Gastrocnemius medialis (tissue), 4 donors: ENCODE measurements at regions of chr20 and their contacts with region 1.

Region 1: GRCh38 chr20:36199345-36200257 is 36.7 kb upstream of the AAR2 start:
- DNase-seq: peak; percentile 37 to 74
- ATAC-seq: peak; percentile 73 to 86
- H3K4me3 ChIP-seq: no peak overlapping the region
- H3K27ac ChIP-seq: no peak overlapping the region
- H3K4me1 ChIP-seq: peaks cover 0 to 4% of the 10 kb centered on the region in 2 donors
- H3K27me3 ChIP-seq: no peaks in the 10 kb centered on the region
- CTCF ChIP-seq: peak; percentile 73 to 90 (median 85)
- POLR2A ChIP-seq: no peak

Region 2: DNA sequence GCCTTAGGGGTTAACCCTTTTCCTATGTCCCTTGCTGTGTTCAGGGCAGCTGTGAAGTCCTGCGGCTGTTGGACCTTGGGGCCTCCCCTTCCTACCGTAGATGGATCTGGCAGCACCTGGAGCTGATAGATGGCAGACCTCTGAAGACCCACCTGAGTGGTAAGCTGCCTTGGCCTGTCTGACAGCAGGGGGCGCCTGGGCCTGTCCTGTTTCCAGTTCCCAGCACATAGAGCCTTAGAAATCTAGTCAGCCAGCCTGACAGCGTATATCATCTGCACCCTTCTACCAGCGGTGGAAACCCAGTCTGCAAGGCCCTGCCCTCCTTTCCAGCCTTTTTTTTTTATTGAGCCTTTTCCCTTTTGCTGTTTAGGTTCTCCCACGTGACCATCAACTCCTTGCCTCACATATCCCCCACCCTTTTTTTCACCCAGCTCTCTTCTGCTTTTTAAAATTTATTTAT is 204.6 kb before region 1 on chr20:
- in situ Hi-C with region 1: no loop called
- intact Hi-C with region 1: loop called (anchors 5 kb)
- DNase-seq: peak; percentile 46 to 65
- ATAC-seq: peak; percentile 82 to 94
- H3K4me3 ChIP-seq: no peak overlapping the region
- H3K27ac ChIP-seq: no peak overlapping the region
- H3K4me1 ChIP-seq: peaks cover 6 to 10% of the 10 kb centered on the region in 2 donors
- H3K27me3 ChIP-seq: no peaks in the 10 kb centered on the region
- CTCF ChIP-seq: peak; percentile 76 to 87 (median 83)
- POLR2A ChIP-seq: no peak

Region 3: GRCh38 chr20:36098364-36098763 is 101.2 kb before region 1 on chr20:
- in situ Hi-C with region 1: no loop called
- intact Hi-C with region 1: no loop called
- DNase-seq: peak in 1 of 2 donors; percentile 36
- ATAC-seq: peak in 1 of 2 donors; percentile 47
- H3K4me3 ChIP-seq: no peak overlapping the region
- H3K27ac ChIP-seq: peak overlapping the region in 1 of 4 donors; percentile 26
- H3K4me1 ChIP-seq: peaks cover under 1 to 5% of the 10 kb centered on the region in 2 donors
- H3K27me3 ChIP-seq: peaks cover 4 to 12% (median 8%) of the 10 kb centered on the region in 3 donors
- CTCF ChIP-seq: no peak
- POLR2A ChIP-seq: no peak

Region 4: GRCh38 chr20:36155991-36156390 is 43.6 kb before region 1 on chr20:
- in situ Hi-C with region 1: no loop called
- intact Hi-C with region 1: loop called (anchors 1 kb)
- DNase-seq: no peak
- ATAC-seq: no peak
- H3K4me3 ChIP-seq: peak overlapping the region in 1 of 4 donors; percentile 59
- H3K27ac ChIP-seq: peak overlapping the region in 1 of 4 donors; percentile 62
- H3K4me1 ChIP-seq: peaks cover 7 to 13% of the 10 kb centered on the region in 2 donors
- H3K27me3 ChIP-seq: no peaks in the 10 kb centered on the region
- CTCF ChIP-seq: no peak
- POLR2A ChIP-seq: no peak

Region 5: DNA sequence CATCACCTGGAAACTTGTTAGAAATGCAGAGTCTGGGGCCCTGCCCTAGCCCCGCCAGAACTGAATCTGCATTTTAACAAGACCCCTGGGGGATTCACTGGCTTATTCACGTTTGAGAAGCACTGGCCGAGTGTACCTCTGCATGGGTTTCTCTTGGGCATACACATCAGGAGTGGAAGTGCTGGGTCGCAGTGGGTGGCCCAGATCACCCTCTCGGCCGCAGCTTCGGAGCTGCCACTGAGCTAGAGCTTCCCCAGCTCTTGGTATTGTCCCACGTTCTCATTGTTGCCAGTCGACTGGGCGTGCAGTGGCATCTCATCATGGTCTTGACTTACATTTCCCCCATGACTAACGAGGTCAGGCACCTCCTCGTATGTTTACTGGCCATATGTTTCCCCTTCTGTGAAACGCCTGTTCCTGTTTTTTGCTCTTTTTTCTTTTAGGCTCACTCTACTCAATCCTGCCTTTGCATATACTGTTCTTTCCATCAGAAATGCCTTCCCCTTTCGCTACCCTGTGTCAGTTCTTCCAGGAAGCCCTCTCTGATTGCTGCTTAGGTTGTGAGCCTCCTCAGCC is 103.5 kb after region 1 on chr20:
- in situ Hi-C with region 1: no loop called
- intact Hi-C with region 1: no loop called
- DNase-seq: no peak
- ATAC-seq: no peak
- H3K4me3 ChIP-seq: no peak overlapping the region
- H3K27ac ChIP-seq: no peak overlapping the region
- H3K4me1 ChIP-seq: peaks cover 4% of the 10 kb centered on the region in 2 donors
- H3K27me3 ChIP-seq: peaks cover 58 to 63% (median 60%) of the 10 kb centered on the region in 3 donors
- CTCF ChIP-seq: no peak
- POLR2A ChIP-seq: no peak

Region 6: DNA sequence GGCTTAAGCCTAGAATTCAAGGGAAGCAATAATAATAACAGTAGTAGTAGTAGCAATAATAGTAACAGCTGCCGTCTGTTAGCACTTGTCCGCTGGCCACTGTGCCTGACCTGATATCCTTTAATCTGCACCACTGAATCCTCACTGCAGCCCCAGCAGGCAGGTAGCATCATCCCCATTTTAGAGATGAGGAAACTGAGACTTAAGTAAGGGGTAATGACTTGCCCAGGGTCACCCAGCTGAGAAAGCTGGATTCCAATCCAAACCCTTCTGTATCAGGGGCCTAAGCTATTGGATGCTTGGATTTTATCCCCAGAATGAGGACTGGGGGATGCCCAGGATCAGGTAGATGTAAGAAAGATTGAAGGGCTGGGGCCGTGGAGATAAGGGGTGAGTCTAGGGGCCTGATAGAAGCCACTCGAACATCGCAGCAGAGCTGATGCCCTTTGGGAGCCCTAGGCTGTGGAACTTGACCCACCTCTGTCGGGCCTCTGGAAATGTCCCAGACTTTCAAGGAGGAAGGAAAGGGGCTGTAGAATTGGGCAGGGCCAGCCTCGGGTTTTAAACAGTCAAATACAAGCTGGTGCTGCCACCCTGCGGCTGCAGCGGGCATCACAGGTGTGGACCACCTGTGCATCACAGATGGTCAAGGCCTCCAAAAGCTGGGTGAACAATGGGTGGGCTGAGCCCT is 239.6 kb after region 1 on chr20:
- in situ Hi-C with region 1: loop called in 3 of 4 experiments (anchors 5 to 10 kb)
- intact Hi-C with region 1: loop called (anchors 1 kb)
- DNase-seq: peak in 1 of 2 donors; percentile 57
- ATAC-seq: peak; percentile 61 to 70
- H3K4me3 ChIP-seq: no peak overlapping the region
- H3K27ac ChIP-seq: no peak overlapping the region
- H3K4me1 ChIP-seq: no peaks in the 10 kb centered on the region
- H3K27me3 ChIP-seq: peaks cover 0 to 8% (median 0%) of the 10 kb centered on the region in 3 donors
- CTCF ChIP-seq: peak; percentile 76 to 90 (median 87)
- POLR2A ChIP-seq: no peak

Region 7: GRCh38 chr20:36447101-36447500 is 247.5 kb after region 1 on chr20:
- in situ Hi-C with region 1: loop called in 2 of 4 experiments (anchors 5 to 10 kb)
- intact Hi-C with region 1: no loop called
- DNase-seq: no peak
- ATAC-seq: no peak
- H3K4me3 ChIP-seq: no peak overlapping the region
- H3K27ac ChIP-seq: no peak overlapping the region
- H3K4me1 ChIP-seq: peaks cover 0 to 6% of the 10 kb centered on the region in 2 donors
- H3K27me3 ChIP-seq: no peaks in the 10 kb centered on the region
- CTCF ChIP-seq: no peak
- POLR2A ChIP-seq: no peak

Region 8: GRCh38 chr20:36574366-36575135 is 374.9 kb after region 1 on chr20:
- in situ Hi-C with region 1: loop called in 1 of 4 experiments (anchors 25 kb)
- intact Hi-C with region 1: no loop called
- DNase-seq: no peak
- ATAC-seq: peak in 1 of 2 donors; percentile 23
- H3K4me3 ChIP-seq: peak overlapping the region; percentile 68 to 89 (median 72)
- H3K27ac ChIP-seq: peak overlapping the region in 3 of 4 donors; percentile 71 to 83 (median 79)
- H3K4me1 ChIP-seq: peaks cover 7 to 18% of the 10 kb centered on the region in 2 donors
- H3K27me3 ChIP-seq: peaks cover 10 to 19% (median 16%) of the 10 kb centered on the region in 3 donors
- CTCF ChIP-seq: no peak
- POLR2A ChIP-seq: no peak

Region 9: GRCh38 chr20:36886859-36887751 is 687.5 kb after region 1 on chr20:
- in situ Hi-C with region 1: no loop called
- intact Hi-C with region 1: loop called (anchors 5 kb)
- DNase-seq: peak; percentile 61 to 70
- ATAC-seq: peak; percentile 70 to 83
- H3K4me3 ChIP-seq: no peak overlapping the region
- H3K27ac ChIP-seq: peak overlapping the region in 1 of 4 donors; percentile 12
- H3K4me1 ChIP-seq: peaks cover 0 to 5% of the 10 kb centered on the region in 2 donors
- H3K27me3 ChIP-seq: no peaks in the 10 kb centered on the region
- CTCF ChIP-seq: peak; percentile 77 to 93 (median 85)
- POLR2A ChIP-seq: no peak